Ovary (tissue), 10 donors: ENCODE measurements at regions of chr6 and their contacts with region 1.

Region 1: GRCh38 chr6:87472525-87473418 is at the start of gene SLC35A1:
- DNase-seq: peak; percentile 82 to 91 (median 87)
- H3K4me3 ChIP-seq: peak within 1 kb of the TSS; percentile 97
- H3K27ac ChIP-seq: peak within 1 kb of the TSS; percentile 76 to 91
- H3K4me1 ChIP-seq: peaks cover 3% of the 10 kb centered on the region
- H3K27me3 ChIP-seq: no peaks in the 10 kb centered on the region
- CTCF ChIP-seq: peak; percentile 22 to 59 (median 37)
- EP300 ChIP-seq: no peak
- POLR2A ChIP-seq: peak; percentile 36
- total RNA-seq, gene SLC35A1: 16.6 to 24.6 (median 21.2) TPM

Region 2: GRCh38 chr6:87154993-87155841 is 317.6 kb before region 1 on chr6 and contains the start of gene ZNF292:
- intact Hi-C with region 1: loop called in 1 of 4 experiments (anchors 5 kb)
- DNase-seq: peak; percentile 93 to 96 (median 94)
- H3K4me3 ChIP-seq: peak within 1 kb of the TSS; percentile 85
- H3K27ac ChIP-seq: peak within 1 kb of the TSS; percentile 96 to 99
- H3K4me1 ChIP-seq: peaks cover 3% of the 10 kb centered on the region
- H3K27me3 ChIP-seq: no peaks in the 10 kb centered on the region
- CTCF ChIP-seq: peak in 1 of 3 donors; percentile 37
- EP300 ChIP-seq: peak; percentile 2
- POLR2A ChIP-seq: peak; percentile 56
- total RNA-seq, gene ZNF292: 37.6 to 158 (median 82.7) TPM

Region 3: GRCh38 chr6:87277123-87277522 is 195.6 kb before region 1 on chr6:
- intact Hi-C with region 1: no loop called
- DNase-seq: no peak
- H3K4me3 ChIP-seq: no peak overlapping the region
- H3K27ac ChIP-seq: no peak overlapping the region
- H3K4me1 ChIP-seq: no peaks in the 10 kb centered on the region
- H3K27me3 ChIP-seq: no peaks in the 10 kb centered on the region
- CTCF ChIP-seq: no peak
- EP300 ChIP-seq: no peak
- POLR2A ChIP-seq: no peak